ENCODE measurements at regions of chr4 and their contacts with region 1.

Region 1: GRCh38 chr4:87150498-87151261 is 69.7 kb downstream of the KLHL8 start:
- DNase-seq: peak; percentile 53
- ATAC-seq: peak; percentile 61
- H3K4me3 Mint-ChIP-seq: no peak overlapping the region
- H3K27ac Mint-ChIP-seq: no peak overlapping the region
- H3K4me1 Mint-ChIP-seq: no peaks in the 10 kb centered on the region
- H3K27me3 Mint-ChIP-seq: no peaks in the 10 kb centered on the region

Region 2: GRCh38 chr4:87166296-87166854 is 15.7 kb after region 1 on chr4:
- CTCF ChIA-PET with region 1: interaction called, 15 read pairs
- DNase-seq: no peak
- ATAC-seq: no peak
- H3K4me3 Mint-ChIP-seq: no peak overlapping the region
- H3K27ac Mint-ChIP-seq: no peak overlapping the region
- H3K4me1 Mint-ChIP-seq: no peaks in the 10 kb centered on the region
- H3K27me3 Mint-ChIP-seq: no peaks in the 10 kb centered on the region

Region 3: GRCh38 chr4:87235020-87235671 is 84.5 kb after region 1 on chr4:
- CTCF ChIA-PET with region 1: interaction called, 51 read pairs
- DNase-seq: no peak
- ATAC-seq: no peak
- H3K4me3 Mint-ChIP-seq: peak overlapping the region; percentile 69
- H3K27ac Mint-ChIP-seq: no peak overlapping the region
- H3K4me1 Mint-ChIP-seq: peaks cover 2% of the 10 kb centered on the region
- H3K27me3 Mint-ChIP-seq: peaks cover 20% of the 10 kb centered on the region

Region 4: DNA sequence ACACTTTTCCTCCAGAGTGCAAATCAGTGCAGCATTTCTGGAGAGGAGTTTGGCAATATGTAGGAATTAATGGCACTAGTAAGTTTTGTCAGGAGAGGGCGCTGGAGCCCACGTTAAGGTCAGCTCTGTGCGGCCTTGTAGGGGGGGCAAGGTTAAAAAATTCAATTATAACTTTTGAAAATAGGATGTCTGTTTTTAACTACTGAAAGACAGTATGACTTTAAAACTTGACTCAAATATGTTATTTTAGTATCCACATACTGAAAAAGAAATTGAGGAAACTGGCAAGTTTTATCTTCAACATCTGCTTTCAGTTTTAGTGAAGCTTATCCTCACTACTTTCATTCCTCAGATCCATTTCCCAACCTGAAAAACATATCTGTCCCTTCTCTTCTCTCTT is 202.9 kb after region 1 on chr4:
- CTCF ChIA-PET with region 1: no interaction called
- DNase-seq: no peak
- ATAC-seq: no peak
- H3K4me3 Mint-ChIP-seq: no peak overlapping the region
- H3K27ac Mint-ChIP-seq: no peak overlapping the region
- H3K4me1 Mint-ChIP-seq: peaks cover 5% of the 10 kb centered on the region
- H3K27me3 Mint-ChIP-seq: no peaks in the 10 kb centered on the region

Region 5: DNA sequence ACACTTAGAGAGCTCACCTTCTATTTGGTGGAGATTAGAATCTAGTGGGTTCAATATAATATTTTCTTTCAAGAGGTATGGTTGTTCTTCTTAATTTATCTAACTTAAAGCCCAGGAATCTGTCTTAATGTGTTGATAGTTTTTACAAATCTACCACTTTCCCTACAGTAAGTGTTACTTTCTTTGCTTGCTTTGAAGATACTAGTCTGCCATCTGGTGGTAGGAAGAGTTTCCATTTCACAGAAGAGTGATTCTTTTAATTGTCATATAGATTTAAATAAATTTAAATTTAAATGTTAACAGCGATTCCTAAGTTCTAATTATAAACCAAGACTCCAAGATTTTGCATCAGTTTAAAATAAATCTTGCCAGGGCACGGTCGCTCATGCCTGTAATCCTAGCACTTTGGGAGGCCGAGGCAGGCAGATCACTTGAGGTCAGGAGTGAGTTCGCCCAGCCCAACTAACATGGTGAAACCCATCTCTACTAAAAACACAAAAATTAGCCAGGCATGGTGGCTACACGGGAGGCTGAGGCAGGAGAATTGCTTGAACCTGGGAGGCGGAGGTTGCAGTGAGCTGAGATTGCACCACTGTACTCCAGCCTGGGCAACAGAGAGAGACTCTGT is 315.2 kb after region 1 on chr4:
- CTCF ChIA-PET with region 1: interaction called, 10 read pairs
- DNase-seq: no peak
- ATAC-seq: peak; percentile 42
- H3K4me3 Mint-ChIP-seq: no peak overlapping the region
- H3K27ac Mint-ChIP-seq: no peak overlapping the region
- H3K4me1 Mint-ChIP-seq: peaks cover 4% of the 10 kb centered on the region
- H3K27me3 Mint-ChIP-seq: no peaks in the 10 kb centered on the region

Measured in activated CD8-positive, alpha-beta memory T cell treated with anti-CD3 and anti-CD28 coated beads, Interleukin-2, amount 10 ng/mL, durations not matched to agents 7 days and 5 days (primary cell).